ENCODE measurements at regions of chr10 and their contacts with region 1.

Region 1: DNA sequence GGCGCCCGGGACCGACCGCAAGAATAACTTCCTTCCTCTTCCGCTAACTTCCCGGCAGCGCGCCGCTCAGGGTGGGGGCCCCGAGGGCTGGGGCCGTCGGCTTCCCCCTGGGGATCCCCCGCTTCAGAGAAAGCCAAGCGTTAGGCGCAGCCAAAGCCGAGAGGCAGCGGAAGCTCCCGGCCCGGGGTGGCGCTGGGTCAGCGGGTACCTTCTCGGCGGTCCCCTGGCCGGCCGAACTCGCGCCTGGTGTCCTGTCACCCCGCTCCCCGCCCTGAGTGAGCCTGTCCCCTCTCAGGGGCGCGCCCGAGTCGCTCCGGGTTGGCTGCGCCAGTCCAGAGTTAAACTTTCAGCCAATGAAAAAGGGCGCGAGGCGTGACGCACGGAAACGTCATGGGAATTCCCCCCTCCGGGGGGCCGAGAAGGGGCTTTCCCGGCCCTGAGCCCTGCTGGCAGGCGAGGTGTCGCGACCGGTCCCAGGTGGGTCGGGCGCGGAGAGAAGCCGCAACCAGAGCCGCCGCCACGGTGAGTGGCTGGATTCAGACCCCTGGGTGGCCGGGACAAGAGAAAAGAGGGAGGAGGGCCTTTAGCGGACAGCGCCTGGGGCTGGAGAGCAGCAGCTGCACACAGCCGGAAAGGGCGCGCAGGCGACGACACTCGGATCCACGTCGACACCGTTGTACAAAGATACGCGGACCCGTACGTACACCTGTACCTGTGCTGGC is 1.3 kb upstream of the NFKB2 start:
- DNase-seq: peak; percentile 70
- H3K4me3 ChIP-seq: peak overlapping the region; percentile 78
- CTCF ChIP-seq: no peak

Region 2: GRCh38 chr10:102352066-102352715 is 42.0 kb before region 1 on chr10:
- CTCF ChIA-PET with region 1: interaction called, 11 read pairs
- POLR2A ChIA-PET with region 1: no interaction called
- DNase-seq: no peak
- H3K4me3 ChIP-seq: no peak overlapping the region
- CTCF ChIP-seq: peak; percentile 83

Region 3: GRCh38 chr10:102375250-102375649 is 19.0 kb before region 1 on chr10:
- CTCF ChIA-PET with region 1: interaction called, 111 read pairs
- POLR2A ChIA-PET with region 1: no interaction called
- DNase-seq: no peak
- H3K4me3 ChIP-seq: no peak overlapping the region
- CTCF ChIP-seq: no peak

Region 4: DNA sequence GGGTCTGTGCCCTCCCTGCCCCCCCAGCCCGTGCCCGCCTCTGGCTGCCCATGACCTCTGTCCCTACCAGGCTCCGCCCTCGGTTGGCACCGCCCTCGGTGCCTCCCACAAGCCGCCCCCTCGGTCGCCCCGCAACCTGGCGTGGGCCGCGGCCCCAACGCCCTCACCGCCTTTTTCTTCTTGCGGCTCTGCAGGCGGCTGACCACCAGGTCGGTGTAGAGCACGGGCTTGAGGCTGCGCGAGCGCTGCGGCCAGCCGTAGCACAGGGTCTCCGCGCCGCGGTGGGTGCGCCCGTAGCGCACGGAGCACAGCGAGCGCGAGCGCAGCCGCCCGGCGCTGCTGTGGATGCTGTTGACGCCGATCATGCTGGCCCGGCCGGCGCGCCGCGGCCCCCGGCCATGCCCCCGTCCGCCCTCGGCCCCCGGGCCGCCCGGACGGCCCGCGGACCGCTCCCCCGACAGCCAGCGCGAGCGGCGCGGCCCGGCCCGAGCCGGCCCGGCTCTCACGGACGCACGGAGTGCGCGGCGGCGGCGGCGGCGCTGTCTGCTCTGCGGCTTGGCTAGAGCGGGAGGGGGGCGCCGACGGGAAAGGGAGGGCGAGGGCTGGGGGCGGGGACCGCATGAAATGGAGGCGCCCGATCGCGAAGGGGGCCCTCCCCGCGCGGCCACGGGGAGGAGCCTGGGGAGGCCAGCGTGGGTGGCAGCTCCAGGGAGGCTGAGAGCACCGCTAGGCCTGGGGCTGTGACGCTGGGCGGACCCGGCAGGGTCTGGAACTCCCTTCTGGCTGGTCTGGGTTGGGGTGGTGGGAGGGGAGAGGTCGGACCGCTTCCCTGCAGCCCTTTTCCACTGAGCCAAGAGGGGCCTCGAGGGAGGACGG is 14.7 kb after region 1 on chr10:
- CTCF ChIA-PET with region 1: interaction called, 161 read pairs
- POLR2A ChIA-PET with region 1: no interaction called
- DNase-seq: no peak
- H3K4me3 ChIP-seq: peak overlapping the region; percentile 52
- CTCF ChIP-seq: no peak

Region 5: DNA sequence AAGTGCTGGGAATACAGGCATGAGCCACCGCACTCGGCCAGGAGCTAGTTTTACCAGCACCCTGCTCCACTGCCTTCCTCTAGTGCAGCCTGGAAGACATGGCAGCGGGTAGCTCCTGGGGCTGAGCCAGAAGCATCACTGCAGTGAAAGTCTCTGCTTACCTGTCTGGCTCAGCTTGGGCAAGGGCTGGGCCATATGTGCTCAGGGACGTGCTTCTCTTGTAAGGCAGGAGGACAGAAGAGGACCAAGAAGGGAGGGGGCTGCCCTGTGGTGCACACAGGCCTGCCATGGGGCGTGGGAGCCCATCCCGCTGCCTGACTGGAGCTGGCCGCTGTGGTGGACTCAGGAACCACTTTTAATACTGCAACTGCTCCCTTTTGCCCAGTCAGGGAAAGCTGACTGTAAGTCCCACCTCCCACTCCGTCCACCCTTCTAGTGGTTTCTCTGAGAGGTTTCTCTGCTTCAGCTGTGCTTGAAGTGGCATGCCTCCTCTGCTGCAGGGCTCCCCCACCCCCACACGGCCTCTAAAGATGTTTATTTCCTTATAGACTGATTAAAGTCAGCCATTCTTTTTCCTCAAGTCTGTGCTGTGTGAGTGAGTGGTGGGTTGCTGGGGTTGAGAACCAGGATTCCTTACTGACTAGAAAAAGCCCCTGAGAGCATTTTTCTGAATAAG is 82.4 kb after region 1 on chr10:
- CTCF ChIA-PET with region 1: interaction called, 36 read pairs
- POLR2A ChIA-PET with region 1: no interaction called
- DNase-seq: no peak
- H3K4me3 ChIP-seq: no peak overlapping the region
- CTCF ChIP-seq: no peak

Region 6: GRCh38 chr10:102583435-102584417 is 189.5 kb after region 1 on chr10:
- CTCF ChIA-PET with region 1: interaction called, 12 read pairs
- POLR2A ChIA-PET with region 1: no interaction called
- DNase-seq: peak; percentile 49
- H3K4me3 ChIP-seq: no peak overlapping the region
- CTCF ChIP-seq: peak; percentile 81

Measured in AG04449 (cell line).